AG04450 (cell line): ENCODE measurements at regions of chr11 and their contacts with region 1.

Region 1: GRCh38 chr11:76207642-76208401 is 1.5 kb upstream of the WNT11 start:
- DNase-seq: no peak
- H3K4me3 ChIP-seq: peak overlapping the region; percentile 49
- H3K27ac ChIP-seq: no peak overlapping the region
- H3K27me3 ChIP-seq: peaks cover 85% of the 10 kb centered on the region
- CTCF ChIP-seq: peak; percentile 84

Region 2: DNA sequence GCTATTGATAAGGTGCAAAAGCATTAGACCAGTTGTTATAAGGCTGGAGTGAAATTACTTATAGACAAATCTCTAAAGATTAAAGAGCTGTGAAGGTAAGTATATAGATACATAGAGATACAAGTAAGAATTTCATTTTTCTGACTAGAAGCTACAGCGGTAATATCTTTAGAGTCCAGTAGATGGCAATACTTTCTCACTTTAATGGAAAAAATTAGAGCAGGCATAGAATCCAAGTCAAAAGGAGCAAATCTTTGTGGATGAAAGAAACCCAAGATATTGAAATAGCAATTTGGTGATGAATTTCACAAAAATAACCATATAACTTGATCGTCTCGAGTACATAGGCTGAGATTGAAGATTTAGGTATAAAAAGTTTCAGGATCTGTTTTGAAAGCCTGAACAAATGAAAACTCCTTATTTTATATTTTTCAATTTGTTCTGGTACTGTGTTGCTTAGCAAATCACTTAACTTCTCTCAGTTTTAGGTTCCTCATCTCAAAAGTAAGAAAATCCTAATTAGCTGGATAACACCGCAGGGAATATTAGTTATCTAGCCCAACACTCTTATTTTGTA is 310.9 kb before region 1 on chr11:
- CTCF ChIA-PET with region 1: interaction called, 52 read pairs
- POLR2A ChIA-PET with region 1: interaction called, 3 read pairs
- DNase-seq: peak; percentile 7
- H3K4me3 ChIP-seq: no peak overlapping the region
- H3K27ac ChIP-seq: no peak overlapping the region
- H3K27me3 ChIP-seq: no peaks in the 10 kb centered on the region
- CTCF ChIP-seq: peak; percentile 67

Region 3: DNA sequence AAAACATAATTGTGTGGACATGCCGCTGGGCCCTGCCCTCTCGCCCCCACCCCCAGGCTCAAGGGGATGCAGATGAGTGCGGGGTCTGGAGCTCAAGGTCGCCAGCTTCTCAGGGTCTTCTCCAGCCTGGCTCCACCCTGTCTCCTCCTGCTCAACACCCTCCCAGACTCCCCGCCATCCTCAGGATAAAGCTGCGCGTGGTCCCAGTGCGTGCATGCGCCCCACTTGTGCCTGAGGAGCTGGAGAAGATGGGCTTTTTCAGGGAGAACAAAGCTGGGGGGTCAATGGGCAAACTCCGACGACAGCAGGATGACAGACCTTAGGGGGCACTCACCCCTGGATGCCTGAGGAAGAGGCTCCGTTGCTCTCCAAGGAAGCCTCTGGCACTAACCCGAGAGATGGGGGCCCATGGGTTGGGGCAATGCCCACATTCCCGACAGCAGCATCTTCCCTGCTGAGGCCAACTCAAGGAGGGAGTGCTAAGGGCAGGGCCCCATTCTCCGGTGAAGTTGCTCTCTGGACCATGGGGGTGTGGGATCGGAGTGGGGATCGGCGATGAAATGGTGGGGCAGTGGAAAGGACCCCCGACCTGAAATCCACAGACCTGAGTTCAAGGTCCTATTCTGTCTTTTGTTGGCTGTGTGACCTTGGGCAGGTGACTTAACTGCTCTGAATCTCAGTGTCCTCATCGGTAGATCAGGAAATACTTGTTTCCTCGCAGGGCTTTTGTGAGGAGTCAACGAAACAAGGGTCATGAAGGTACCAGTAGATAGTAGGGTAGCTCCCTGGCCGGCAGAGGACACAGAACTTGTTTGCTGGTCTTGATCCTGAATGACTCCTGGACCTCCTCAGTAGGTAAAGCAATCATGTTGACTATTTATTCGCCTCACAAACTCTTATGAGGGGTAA is 49.2 kb before region 1 on chr11:
- CTCF ChIA-PET with region 1: no interaction called
- POLR2A ChIA-PET with region 1: no interaction called
- DNase-seq: no peak
- H3K4me3 ChIP-seq: no peak overlapping the region
- H3K27ac ChIP-seq: no peak overlapping the region
- H3K27me3 ChIP-seq: peaks cover 27% of the 10 kb centered on the region
- CTCF ChIP-seq: no peak

Region 4: GRCh38 chr11:76235233-76236091 is 27.6 kb after region 1 on chr11:
- CTCF ChIA-PET with region 1: interaction called, 13 read pairs
- POLR2A ChIA-PET with region 1: no interaction called
- DNase-seq: peak; percentile 85
- H3K4me3 ChIP-seq: peak overlapping the region; percentile 91
- H3K27ac ChIP-seq: peak overlapping the region; percentile 94
- H3K27me3 ChIP-seq: peaks cover 14% of the 10 kb centered on the region
- CTCF ChIP-seq: no peak

Region 5: DNA sequence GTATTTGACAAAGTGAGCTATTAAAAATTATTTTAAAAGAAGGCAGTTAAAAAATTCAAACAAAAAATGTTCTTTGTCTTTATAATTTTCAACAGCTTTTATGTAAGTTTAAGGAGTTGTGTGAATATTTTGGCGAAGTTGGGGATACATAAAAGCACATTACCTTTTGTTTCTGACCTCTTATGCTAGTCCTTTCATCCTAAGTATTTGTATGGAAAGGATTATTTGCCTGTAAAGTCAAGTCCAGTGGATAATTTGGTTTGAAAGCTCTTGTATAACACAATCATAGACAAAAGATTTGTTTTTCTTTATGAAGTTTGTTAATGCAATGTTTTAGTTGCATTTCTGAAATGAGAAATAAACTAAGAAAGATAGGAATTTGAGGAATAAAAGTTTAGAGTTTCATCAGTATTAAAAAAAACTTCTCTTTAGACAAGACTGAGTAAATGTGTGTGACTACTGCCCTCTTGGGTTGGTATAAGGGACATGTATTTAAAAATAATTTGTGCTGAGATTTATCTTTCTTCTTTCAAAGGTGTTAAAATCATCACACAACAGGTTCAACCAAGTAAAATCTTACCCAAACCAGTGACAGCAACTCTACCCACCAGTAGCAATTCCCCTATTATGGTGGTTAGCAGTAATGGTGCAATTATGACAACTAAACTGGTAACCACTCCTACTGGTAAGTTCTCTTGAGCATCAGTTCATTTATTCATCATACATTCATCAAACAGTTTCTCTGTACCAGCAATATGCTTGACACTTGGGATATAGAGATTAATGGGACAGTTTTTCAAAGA is 305.2 kb after region 1 on chr11:
- CTCF ChIA-PET with region 1: interaction called, 41 read pairs
- POLR2A ChIA-PET with region 1: no interaction called
- DNase-seq: peak; percentile 18
- H3K4me3 ChIP-seq: no peak overlapping the region
- H3K27ac ChIP-seq: no peak overlapping the region
- H3K27me3 ChIP-seq: no peaks in the 10 kb centered on the region
- CTCF ChIP-seq: peak; percentile 52